ENCODE measurements at regions of chr22 and their contacts with region 1.

Region 1: GRCh38 chr22:35219012-35219411 is 38.3 kb upstream of the HMGXB4 start:
- DNase-seq: no peak
- ATAC-seq: no peak
- H3K4me3 ChIP-seq: no peak overlapping the region
- H3K27ac ChIP-seq: no peak overlapping the region
- H3K4me1 ChIP-seq: no peaks in the 10 kb centered on the region
- H3K27me3 ChIP-seq: peaks cover 0 to 27% (median 10%) of the 10 kb centered on the region in 7 donors
- CTCF ChIP-seq: no peak

Region 2: DNA sequence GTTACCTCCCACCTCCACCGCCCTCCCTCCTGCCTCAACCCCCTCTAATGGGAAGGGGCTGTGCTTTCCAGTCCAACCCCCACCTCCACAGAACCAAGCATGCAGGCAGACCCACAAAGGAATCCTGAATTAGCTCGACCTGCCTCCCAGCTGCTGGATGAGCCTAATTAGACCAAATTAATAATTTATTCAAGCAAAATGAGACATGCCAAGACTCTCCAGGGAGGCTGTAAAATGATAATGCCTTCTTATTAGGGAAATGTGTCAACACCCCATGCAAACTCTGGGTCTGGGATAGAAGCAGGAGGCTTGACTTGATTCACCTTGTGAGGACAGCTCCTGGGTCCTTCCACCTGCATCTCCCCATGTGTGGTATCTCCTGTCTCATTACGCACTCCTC is 21.1 kb before region 1 on chr22:
- intact Hi-C with region 1: loop called in 1 of 10 experiments (anchors 2 kb)
- DNase-seq: no peak
- ATAC-seq: no peak
- H3K4me3 ChIP-seq: no peak overlapping the region
- H3K27ac ChIP-seq: no peak overlapping the region
- H3K4me1 ChIP-seq: no peaks in the 10 kb centered on the region
- H3K27me3 ChIP-seq: peaks cover 0 to 29% (median 18%) of the 10 kb centered on the region in 7 donors
- CTCF ChIP-seq: no peak

Measured in heart right ventricle (tissue), 16 donors.